ENCODE measurements at regions of chr12 and their contacts with region 1.

Region 1: GRCh38 chr12:52213512-52214420 is 19.3 kb upstream of the KRT7 start:
- DNase-seq: peak; percentile 93

Region 2: GRCh38 chr12:52280319-52280795 is 66.6 kb after region 1 on chr12:
- in situ Hi-C with region 1: loop called (anchors 5 kb)
- DNase-seq: peak; percentile 98

Region 3: DNA sequence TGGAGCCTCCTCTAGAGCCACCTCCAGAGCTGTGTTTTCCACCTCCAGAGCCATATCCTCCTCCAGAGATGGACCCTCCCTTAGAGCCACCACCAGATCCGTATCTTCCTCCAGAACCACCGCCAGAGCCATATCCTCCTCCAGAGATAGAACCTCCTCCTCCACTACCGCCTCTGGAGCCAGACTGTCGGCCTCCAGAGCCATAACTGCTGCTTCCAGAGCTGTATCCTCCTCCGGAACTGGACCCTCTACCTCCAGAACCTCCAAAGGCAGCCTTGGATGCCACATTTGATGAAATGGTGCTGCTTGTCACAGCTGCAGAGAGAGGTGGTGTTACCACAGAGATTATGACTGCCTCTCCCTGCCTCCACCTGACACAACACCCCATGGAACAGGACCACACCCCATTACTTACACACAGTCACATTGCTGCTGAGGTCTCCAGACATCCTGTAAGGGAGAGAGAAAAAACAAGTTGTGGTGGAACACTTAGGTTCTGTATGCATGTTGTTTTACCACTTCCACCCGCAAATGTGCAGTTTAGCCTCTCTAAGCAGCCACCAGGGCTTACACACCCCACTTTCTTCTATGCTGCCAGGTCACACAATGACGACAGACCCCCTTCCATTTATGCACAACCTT is 431.5 kb after region 1 on chr12:
- in situ Hi-C with region 1: loop called (anchors 10 kb)
- DNase-seq: no peak

Region 4: GRCh38 chr12:52980693-52981423 is 767.1 kb after region 1 on chr12:
- in situ Hi-C with region 1: loop called (anchors 10 kb)
- DNase-seq: peak; percentile 94

Measured in Caki2 (cell line).